GM13976 (cell line): ENCODE measurements at regions of chr5 and their contacts with region 1.

Region 1: GRCh38 chr5:95858661-95859326 is 36.3 kb upstream of the GLRX start:
- DNase-seq: peak; percentile 90
- CTCF ChIP-seq: peak; percentile 90

Region 2: DNA sequence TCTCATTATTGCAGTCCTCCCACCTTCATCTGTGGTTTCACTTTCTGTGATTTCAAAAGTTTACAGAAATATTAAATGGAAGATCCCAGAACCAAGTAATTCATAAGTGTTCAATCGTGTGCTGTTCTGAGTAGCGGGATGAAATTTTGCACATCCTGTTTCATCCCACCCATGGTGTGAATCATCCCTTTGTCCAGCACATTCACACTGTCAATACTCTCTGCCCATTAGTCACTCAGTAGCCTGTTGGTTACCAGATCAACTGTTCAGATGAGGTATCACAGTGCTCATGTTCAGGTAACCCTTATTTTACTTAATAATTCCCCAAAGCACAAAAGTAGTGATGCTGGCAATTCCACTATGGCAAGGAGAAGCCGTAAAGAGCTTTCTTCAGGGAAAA is 440.8 kb before region 1 on chr5:
- in situ Hi-C with region 1: no loop called
- DNase-seq: no peak
- CTCF ChIP-seq: no peak

Region 3: GRCh38 chr5:95794070-95794516 is 64.7 kb before region 1 on chr5:
- in situ Hi-C with region 1: no loop called
- DNase-seq: no peak
- CTCF ChIP-seq: no peak

Region 4: DNA sequence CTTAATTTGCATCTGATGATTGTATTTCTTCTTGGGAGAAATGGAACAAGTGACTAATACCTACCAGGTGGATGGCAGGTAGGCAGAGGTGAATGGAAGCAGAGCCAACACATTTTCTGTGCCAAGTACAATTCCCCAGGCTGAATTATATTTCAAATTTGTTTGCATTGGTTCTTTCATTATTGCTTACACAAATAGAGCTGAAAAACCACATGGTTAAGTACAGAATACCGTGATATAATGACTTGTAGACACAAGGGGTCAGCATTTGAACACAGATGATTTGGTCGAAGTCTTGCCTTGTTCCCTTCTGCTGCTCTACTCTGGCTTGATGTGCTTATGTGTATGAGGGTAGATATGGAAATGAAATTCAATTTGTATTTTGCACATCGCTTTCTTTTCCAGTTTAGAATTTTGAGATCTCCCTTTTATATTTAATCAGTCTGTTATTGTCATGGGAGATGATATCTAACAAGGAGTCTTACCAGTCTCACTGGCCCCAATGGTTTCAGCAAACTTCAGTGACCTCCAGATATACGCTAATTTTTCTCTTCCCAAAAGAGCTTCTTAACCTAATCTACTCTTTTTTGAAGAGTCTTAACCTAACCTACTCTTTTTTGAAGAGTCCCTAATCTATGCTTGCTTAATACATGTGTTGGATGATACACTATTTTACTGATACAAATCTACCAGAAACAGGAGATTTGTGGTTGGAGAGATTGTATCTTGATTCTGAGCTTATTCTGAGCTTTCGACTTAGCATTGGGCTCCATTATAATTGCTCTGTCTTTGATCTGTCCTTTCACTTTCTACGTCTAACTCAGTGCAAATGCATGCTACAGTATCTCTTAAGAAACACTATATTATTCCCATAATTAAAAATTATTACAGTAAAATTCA is 486.1 kb after region 1 on chr5:
- in situ Hi-C with region 1: loop called (anchors 5 kb)
- DNase-seq: peak; percentile 25
- CTCF ChIP-seq: peak; percentile 19

Region 5: GRCh38 chr5:96434201-96434645 is 575.4 kb after region 1 on chr5:
- in situ Hi-C with region 1: loop called (anchors 10 kb)
- DNase-seq: peak; percentile 47
- CTCF ChIP-seq: no peak